MCF 10A (cell line): ENCODE measurements at regions of chr6 and their contacts with region 1.

Region 1: DNA sequence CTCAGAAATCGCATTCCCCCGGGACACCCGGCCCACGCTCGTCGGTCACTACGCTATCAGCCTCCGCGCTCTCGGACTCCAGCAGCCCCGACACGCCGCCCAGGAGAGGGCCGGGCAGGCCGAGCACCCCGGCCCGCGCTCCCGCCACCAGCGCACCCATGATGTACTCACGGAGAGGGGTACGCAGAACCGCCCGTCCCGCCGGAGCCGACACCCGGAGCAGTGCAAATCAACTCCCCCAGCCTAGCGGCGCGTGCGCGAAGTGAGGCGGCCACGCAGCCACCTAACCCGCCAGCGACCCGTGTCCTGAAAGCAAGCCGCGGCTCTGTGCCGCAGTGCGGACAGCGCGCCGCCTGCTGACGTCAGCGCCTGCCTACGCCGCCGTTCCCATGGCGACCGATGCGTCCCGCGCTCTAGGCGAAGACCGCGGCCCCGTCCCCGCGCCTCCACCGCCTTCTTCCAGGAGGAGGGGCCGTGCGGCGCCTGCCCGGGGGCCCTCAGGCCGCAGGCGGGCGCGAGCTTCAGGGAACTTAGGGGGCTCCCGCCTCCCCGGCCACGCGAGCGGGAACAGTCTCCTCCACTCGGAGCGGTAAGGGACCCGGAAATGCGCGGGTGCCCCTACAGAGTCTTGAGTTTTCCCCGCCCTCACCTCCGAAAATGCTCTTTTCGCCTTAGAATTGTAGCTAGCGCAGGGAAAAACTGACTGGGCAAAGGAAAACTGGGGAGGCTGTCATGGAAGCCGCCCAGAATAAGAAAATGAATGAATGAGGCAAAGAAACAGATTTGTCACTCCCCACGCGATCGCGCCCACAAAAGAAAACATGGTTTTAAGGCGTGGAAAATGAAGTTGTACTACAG is at the start of gene AHI1:
- DNase-seq: peak; percentile 93
- H3K4me3 Mint-ChIP-seq: no peak within 1 kb of the TSS
- H3K27ac Mint-ChIP-seq: no peak within 1 kb of the TSS
- H3K4me1 Mint-ChIP-seq: peaks cover 7% of the 10 kb centered on the region
- H3K27me3 Mint-ChIP-seq: no peaks in the 10 kb centered on the region
- CTCF ChIP-seq: no peak
- total RNA-seq, gene AHI1: 23.5 and 26.5 TPM in 2 replicates

Region 2: GRCh38 chr6:135451693-135452092 is 45.9 kb before region 1 on chr6:
- CTCF ChIA-PET with region 1: interaction called, 4 read pairs
- POLR2A ChIA-PET with region 1: interaction called, 9 read pairs
- intact Hi-C with region 1: loop called (anchors 5 kb)
- DNase-seq: peak; percentile 57
- H3K4me3 Mint-ChIP-seq: no peak overlapping the region
- H3K27ac Mint-ChIP-seq: no peak overlapping the region
- H3K4me1 Mint-ChIP-seq: no peaks in the 10 kb centered on the region
- H3K27me3 Mint-ChIP-seq: no peaks in the 10 kb centered on the region
- CTCF ChIP-seq: peak; percentile 61

Region 3: GRCh38 chr6:135481783-135482369 is 15.8 kb before region 1 on chr6:
- CTCF ChIA-PET with region 1: no interaction called
- POLR2A ChIA-PET with region 1: interaction called, 10 read pairs
- intact Hi-C with region 1: no loop called
- DNase-seq: no peak
- H3K4me3 Mint-ChIP-seq: no peak overlapping the region
- H3K27ac Mint-ChIP-seq: no peak overlapping the region
- H3K4me1 Mint-ChIP-seq: no peaks in the 10 kb centered on the region
- H3K27me3 Mint-ChIP-seq: no peaks in the 10 kb centered on the region
- CTCF ChIP-seq: no peak

Region 4: DNA sequence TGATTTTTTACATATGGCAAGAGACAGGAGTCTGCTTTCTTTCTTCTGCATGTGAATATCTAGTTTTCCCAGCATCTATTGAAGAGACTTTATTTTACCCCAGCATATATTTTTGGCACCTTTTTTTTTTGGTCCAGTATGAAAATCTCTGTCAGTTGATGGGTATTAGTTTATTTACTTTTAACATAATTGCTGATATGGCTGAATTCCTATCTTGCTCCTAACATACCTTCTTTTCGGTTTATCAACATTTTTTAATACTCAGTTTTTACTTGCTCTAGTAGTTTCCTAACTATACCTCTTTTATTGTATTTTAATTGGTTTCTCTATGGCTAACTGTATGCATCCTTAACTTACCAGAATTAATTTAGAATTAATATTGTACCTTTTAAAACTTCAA is 276.4 kb after region 1 on chr6:
- CTCF ChIA-PET with region 1: no interaction called
- POLR2A ChIA-PET with region 1: no interaction called
- intact Hi-C with region 1: no loop called
- DNase-seq: no peak
- H3K4me3 Mint-ChIP-seq: no peak overlapping the region
- H3K27ac Mint-ChIP-seq: no peak overlapping the region
- H3K4me1 Mint-ChIP-seq: no peaks in the 10 kb centered on the region
- H3K27me3 Mint-ChIP-seq: no peaks in the 10 kb centered on the region
- CTCF ChIP-seq: no peak

Region 5: DNA sequence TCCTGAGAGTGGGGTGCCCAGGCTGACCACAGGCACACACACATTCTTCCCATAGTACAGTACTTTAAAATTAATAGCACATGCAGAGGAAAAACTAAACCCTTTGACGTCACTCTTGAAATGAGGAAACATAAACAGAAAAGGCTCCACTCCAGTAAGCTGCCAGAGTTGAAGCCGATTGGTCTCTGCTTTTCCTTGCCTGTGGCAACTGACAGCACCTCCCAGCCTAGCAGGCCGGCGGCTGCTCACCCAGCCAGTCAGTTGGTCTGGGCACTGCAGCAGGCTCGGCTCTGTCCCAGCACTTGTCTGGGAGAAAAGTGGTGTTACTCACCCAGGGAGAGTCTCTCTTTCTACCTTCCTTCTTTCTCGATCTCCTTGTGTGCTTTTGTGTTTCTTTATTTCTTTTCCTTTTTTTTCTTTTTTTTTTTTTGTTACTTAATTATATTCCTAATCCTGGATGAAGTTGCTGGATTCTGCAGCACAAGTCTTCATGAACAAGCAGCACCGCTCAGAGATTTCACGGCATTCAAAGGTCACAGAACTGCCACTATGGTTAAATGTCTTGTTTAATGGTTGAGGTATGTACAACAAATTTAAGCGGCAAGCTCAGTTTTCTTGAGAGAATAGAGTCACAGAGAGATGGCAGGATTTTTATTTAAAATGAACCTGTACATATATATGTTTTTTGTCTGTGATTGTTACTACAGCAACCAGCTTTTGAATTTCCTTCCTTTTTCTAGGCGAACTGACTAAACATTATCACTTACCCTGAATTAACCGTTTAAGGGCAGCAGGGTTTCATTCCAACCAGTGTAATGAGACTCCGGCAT is 354.0 kb after region 1 on chr6 and contains the start of gene PDE7B:
- CTCF ChIA-PET with region 1: no interaction called
- POLR2A ChIA-PET with region 1: interaction called, 10 read pairs
- intact Hi-C with region 1: no loop called
- DNase-seq: peak; percentile 95
- H3K4me3 Mint-ChIP-seq: peak within 1 kb of the TSS; percentile 75
- H3K27ac Mint-ChIP-seq: peak within 1 kb of the TSS; percentile 90
- H3K4me1 Mint-ChIP-seq: peaks cover 15% of the 10 kb centered on the region
- H3K27me3 Mint-ChIP-seq: no peaks in the 10 kb centered on the region
- CTCF ChIP-seq: no peak
- total RNA-seq, gene PDE7B: 0.42 and 1.4 TPM in 2 replicates

Region 6: DNA sequence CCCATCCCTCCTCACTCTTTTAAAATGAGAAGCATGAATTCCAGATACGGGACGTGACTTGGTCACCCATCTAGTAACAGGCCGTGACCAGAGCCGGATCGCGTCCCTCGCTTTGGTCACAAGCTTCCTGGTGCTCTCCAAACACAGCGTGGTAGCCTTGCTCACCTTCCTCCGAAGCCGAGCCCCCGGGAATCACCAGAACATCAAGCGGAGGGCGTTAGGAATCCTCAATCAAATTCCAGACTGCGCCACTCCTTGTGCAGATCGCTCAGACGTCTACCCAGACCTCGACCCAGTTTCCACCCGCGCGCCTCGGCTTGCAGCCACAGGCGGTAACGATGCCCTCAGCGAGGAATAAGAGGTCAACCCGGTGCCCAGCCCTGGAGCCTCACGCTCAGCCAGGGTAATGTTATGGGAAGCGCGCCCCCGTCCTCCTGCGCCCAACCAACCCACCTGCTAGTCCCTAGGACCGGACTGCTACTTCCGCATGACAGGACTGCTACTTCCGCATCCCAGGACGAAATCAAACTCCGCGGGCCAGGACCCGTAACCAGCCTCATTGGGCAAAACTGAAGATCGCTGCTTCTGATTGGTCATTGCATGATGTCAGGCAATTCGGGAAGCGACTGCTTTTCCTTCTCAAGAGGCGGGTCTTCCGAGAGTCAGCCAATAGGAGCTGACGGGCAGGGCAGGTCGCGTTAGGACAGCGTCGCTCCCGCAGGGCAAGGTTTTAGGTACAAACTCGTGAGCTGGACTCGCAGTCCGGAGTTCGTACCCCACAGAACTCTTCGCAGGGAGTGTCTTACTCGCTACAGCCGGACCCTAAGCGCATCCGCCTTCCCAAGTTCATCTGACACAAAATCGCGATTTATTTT is 752.4 kb after region 1 on chr6 and contains the start of gene MTFR2:
- CTCF ChIA-PET with region 1: interaction called, 5 read pairs
- POLR2A ChIA-PET with region 1: interaction called, 26 read pairs
- intact Hi-C with region 1: no loop called
- DNase-seq: peak; percentile 100
- H3K4me3 Mint-ChIP-seq: peak within 1 kb of the TSS; percentile 97
- H3K27ac Mint-ChIP-seq: peak within 1 kb of the TSS; percentile 82
- H3K4me1 Mint-ChIP-seq: peaks cover 12% of the 10 kb centered on the region
- H3K27me3 Mint-ChIP-seq: no peaks in the 10 kb centered on the region
- CTCF ChIP-seq: no peak
- total RNA-seq, gene MTFR2: 5.2 and 6.0 TPM in 2 replicates

Region 7: DNA sequence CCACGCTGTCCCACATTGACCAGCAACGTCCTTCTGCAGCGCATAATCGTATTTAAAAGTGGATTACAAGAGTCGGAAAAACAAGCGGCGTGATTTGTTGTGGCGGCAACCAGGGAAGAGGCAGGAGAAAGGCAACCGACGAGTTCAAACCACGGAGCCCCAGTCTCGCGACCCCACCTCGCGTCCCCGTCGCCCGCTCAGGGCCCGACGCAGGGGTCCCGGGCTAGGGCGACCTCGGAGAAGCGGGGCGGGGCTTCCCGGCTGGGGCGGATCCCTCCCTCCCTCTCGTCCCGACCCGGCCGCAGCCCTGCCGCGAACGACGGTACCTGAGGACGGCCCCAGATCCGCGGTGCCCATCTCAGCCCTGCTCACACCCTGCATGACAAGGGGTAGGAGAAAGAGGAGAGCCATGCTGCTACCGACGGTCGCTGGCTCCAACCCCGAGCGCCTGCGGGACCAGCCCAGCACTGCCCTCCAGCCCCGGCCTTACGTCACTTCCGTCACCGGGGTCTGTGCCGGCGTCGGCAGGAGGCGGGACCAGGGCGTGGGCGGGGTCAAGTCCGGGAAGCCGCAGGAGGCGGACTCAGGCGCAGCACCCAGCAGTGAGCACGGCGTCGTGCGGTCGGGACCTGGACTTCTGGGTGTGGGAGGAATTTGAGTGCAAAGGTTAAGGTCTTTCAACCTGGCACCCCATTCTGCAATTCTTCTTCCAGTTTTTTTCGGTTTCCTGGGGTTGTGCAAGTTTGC is 1721.4 kb after region 1 on chr6 and contains the start of gene IFNGR1:
- CTCF ChIA-PET with region 1: no interaction called
- POLR2A ChIA-PET with region 1: no interaction called
- intact Hi-C with region 1: no loop called
- DNase-seq: peak; percentile 96
- H3K4me3 Mint-ChIP-seq: peak within 1 kb of the TSS; percentile 91
- H3K27ac Mint-ChIP-seq: peak within 1 kb of the TSS; percentile 93
- H3K4me1 Mint-ChIP-seq: peaks cover 38% of the 10 kb centered on the region
- H3K27me3 Mint-ChIP-seq: no peaks in the 10 kb centered on the region
- CTCF ChIP-seq: no peak
- total RNA-seq, gene IFNGR1: 57.9 and 58.4 TPM in 2 replicates